ENCODE measurements at regions of chr4 and their contacts with region 1.

Region 1: GRCh38 chr4:184263910-184264732 is 46.4 kb upstream of the ENPP6 start:
- DNase-seq: peak; percentile 91
- ATAC-seq: peak; percentile 63
- H3K4me3 ChIP-seq: no peak overlapping the region
- H3K27ac ChIP-seq: no peak overlapping the region
- H3K4me1 ChIP-seq: peaks cover 25% of the 10 kb centered on the region
- H3K27me3 ChIP-seq: no peaks in the 10 kb centered on the region
- CTCF ChIP-seq: peak; percentile 81

Region 2: GRCh38 chr4:184400375-184400870 is 136.3 kb after region 1 on chr4:
- CTCF ChIA-PET with region 1: no interaction called
- POLR2A ChIA-PET with region 1: no interaction called
- intact Hi-C with region 1: loop called (anchors 5 kb)
- DNase-seq: peak; percentile 91
- ATAC-seq: peak; percentile 96
- H3K4me3 ChIP-seq: no peak overlapping the region
- H3K27ac ChIP-seq: peak overlapping the region; percentile 89
- H3K4me1 ChIP-seq: peaks cover 14% of the 10 kb centered on the region
- H3K27me3 ChIP-seq: no peaks in the 10 kb centered on the region
- CTCF ChIP-seq: no peak

Region 3: GRCh38 chr4:184474263-184475095 is 210.4 kb after region 1 on chr4 and contains the start of gene IRF2:
- CTCF ChIA-PET with region 1: no interaction called
- POLR2A ChIA-PET with region 1: no interaction called
- intact Hi-C with region 1: loop called (anchors 5 kb)
- DNase-seq: peak; percentile 90
- ATAC-seq: peak; percentile 66
- H3K4me3 ChIP-seq: peak within 1 kb of the TSS; percentile 99
- H3K27ac ChIP-seq: peak within 1 kb of the TSS; percentile 84
- H3K4me1 ChIP-seq: peaks cover 16% of the 10 kb centered on the region; the same call in 1 of the 2 replicates
- H3K27me3 ChIP-seq: no peaks in the 10 kb centered on the region
- CTCF ChIP-seq: no peak
- total RNA-seq, gene IRF2: 7.7 TPM in 2 replicates

Region 4: DNA sequence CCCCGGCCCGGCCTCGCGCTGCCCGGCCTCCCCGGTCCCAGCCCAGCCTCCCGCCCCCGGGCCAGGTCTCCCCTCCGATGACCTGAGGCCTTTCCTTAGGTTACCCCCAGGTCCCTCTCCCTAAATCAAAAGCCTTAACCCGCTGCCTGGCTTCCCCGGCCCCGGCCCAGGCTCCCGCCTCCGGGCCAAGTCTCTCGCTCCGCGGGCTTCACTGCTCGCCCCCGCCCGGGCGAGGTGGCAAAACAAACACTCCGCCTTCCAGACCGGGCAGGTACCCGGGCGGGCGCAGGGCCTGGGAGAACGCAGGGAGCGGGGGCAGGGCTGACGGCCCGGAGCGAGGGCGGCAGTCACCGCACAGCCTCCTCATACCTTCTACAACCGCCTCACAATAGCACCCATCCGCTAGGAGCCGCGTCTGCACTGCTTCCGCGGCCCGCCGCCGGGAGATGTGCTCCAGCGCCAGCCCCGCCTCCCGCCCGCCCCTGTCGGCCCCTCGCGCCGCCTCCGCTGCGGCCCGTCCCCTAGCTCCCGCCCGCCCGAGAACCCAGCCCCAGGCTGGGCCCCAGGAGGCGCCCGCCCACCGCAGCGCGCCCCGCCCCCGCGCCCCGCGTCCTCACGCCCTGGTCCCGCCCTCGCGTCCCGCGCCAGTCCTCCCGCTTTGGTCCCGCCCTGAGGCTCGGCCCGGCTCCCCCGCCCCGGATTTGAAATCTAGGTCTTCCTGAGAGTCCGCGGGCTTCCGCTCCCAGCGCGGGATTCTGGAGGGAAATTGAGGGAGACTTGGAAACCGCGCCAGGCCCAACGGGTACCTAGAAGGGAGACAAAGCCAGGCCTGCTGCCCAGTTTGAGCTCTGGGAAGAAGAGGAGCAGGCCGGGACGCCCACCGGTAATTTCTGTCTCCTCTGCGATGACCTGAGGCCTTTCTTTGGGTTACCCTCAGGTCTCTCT is 385.2 kb after region 1 on chr4 and contains the starts of genes CASP3 and PRIMPOL:
- CTCF ChIA-PET with region 1: no interaction called
- POLR2A ChIA-PET with region 1: no interaction called
- intact Hi-C with region 1: loop called (anchors 2 kb)
- DNase-seq: peak; percentile 89
- ATAC-seq: peak; percentile 82
- H3K4me3 ChIP-seq: peak within 1 kb of the TSS; percentile 93
- H3K27ac ChIP-seq: peak within 1 kb of the TSS; percentile 57
- H3K4me1 ChIP-seq: peaks cover 21% of the 10 kb centered on the region
- H3K27me3 ChIP-seq: no peaks in the 10 kb centered on the region
- CTCF ChIP-seq: 0 out of 2 replicates have a peak, but pooled peaks have one; percentile 7
- total RNA-seq, gene CASP3: 11.1 and 13.2 TPM in 2 replicates
- total RNA-seq, gene PRIMPOL: 9.3 and 9.4 TPM in 2 replicates

Measured in PC-3 (cell line).